Activated CD4-positive, alpha-beta memory T cell treated with anti-CD3 and anti-CD28 coated beads for 36 hours (primary cell): ENCODE measurements at regions of chr6 and their contacts with region 1.

Region 1: DNA sequence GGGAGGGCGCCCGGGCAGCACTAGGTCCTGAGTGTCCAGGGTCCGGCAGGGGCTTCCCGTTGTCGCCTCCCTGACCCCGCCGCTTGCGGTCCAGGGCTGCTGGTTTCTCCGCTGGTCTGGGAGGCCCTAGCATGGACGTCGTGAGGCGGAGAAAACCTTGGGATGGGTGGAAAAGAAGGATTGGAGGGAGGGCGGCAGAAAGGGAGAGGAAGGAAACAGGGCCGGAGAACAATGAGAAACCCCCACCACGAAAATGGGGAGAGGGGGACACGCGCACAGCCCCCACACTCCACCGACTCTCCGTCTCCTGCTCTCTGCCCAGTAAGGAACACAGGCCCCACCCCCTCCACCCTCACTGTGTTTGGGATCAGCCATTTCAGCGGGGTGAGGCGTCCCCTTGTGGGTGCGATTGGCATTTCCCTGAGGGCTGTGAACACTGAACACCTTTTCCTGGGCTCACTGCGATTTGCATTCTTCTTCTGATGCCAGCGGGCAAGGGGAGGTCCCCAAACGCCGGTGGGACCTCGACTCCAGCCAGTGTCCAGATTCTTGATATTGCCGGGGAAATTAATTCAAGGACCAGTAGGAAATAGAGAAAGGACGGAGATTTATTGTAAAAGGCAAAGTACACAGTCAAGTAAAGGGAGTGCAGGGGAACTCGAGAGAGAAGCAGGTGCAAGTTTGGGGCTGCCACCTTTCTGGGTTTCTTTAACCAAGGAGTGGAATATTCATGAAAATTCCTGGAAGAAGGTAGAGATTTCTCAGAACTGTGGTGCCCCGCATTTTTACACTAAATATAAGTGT is 3.3 kb upstream of the RAET1G start:
- DNase-seq: peak; percentile 90
- H3K4me3 Mint-ChIP-seq: peak overlapping the region; percentile 51
- H3K27ac Mint-ChIP-seq: no peak overlapping the region
- H3K4me1 Mint-ChIP-seq: peaks cover 26% of the 10 kb centered on the region
- H3K27me3 Mint-ChIP-seq: peaks cover 83% of the 10 kb centered on the region

Region 2: DNA sequence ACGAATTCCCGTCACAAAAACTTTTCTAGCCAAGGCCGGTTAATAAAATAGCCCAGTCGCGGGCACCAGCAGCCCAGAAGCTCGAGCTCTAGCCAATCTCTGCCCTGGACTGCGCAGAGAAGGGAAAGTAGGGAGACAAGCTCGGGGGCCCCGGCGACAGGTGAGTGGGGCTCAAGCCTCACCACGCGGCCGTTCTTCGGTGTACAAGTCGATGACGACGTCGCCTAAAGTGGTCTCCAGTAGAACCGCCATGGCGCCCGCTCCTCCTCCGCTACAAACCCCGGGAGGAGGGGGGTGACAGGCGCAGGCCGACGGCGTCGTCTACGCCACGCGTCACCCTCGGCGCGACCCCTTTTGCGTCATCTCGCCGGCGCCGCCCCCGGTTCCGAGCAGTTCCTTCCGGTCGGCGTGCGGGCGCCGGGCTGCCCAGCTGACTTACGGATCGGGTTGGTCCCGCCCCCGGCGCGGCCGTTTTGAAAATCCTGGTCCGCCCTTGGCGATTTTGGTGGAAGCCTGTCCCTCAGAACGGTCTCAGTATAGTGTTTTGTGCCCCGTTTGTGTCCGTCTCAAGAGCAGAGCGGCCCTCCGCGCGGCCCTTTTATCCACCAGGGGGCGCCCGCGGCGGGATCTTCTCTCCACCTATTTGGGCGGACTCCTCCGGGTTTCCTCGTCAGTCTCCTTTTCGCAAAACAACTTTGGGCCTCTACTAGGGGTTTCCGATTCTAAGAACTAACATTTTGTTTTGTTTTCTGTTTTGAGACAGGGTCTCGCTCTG is 380.2 kb before region 1 on chr6 and contains the start of gene PPIL4:
- CTCF ChIA-PET with region 1: no interaction called
- POLR2A ChIA-PET with region 1: no interaction called
- intact Hi-C with region 1: loop called (anchors 5 kb)
- DNase-seq: peak; percentile 97
- H3K4me3 Mint-ChIP-seq: peak within 1 kb of the TSS; percentile 97
- H3K27ac Mint-ChIP-seq: peak within 1 kb of the TSS; percentile 97
- H3K4me1 Mint-ChIP-seq: peaks cover 38% of the 10 kb centered on the region
- H3K27me3 Mint-ChIP-seq: peaks cover 4% of the 10 kb centered on the region
- total RNA-seq, gene PPIL4: 21.5 to 23.6 TPM

Region 3: GRCh38 chr6:149636116-149636515 is 290.1 kb before region 1 on chr6:
- CTCF ChIA-PET with region 1: no interaction called
- POLR2A ChIA-PET with region 1: no interaction called
- intact Hi-C with region 1: no loop called
- DNase-seq: no peak
- H3K4me3 Mint-ChIP-seq: no peak overlapping the region
- H3K27ac Mint-ChIP-seq: no peak overlapping the region
- H3K4me1 Mint-ChIP-seq: no peaks in the 10 kb centered on the region
- H3K27me3 Mint-ChIP-seq: no peaks in the 10 kb centered on the region

Region 4: GRCh38 chr6:149834513-149835481 is 91.4 kb before region 1 on chr6:
- CTCF ChIA-PET with region 1: interaction called, 30 read pairs
- POLR2A ChIA-PET with region 1: no interaction called
- intact Hi-C with region 1: loop called (anchors 1 kb)
- DNase-seq: peak; percentile 77
- H3K4me3 Mint-ChIP-seq: no peak overlapping the region
- H3K27ac Mint-ChIP-seq: no peak overlapping the region
- H3K4me1 Mint-ChIP-seq: peaks cover 2% of the 10 kb centered on the region
- H3K27me3 Mint-ChIP-seq: no peaks in the 10 kb centered on the region

Region 5: DNA sequence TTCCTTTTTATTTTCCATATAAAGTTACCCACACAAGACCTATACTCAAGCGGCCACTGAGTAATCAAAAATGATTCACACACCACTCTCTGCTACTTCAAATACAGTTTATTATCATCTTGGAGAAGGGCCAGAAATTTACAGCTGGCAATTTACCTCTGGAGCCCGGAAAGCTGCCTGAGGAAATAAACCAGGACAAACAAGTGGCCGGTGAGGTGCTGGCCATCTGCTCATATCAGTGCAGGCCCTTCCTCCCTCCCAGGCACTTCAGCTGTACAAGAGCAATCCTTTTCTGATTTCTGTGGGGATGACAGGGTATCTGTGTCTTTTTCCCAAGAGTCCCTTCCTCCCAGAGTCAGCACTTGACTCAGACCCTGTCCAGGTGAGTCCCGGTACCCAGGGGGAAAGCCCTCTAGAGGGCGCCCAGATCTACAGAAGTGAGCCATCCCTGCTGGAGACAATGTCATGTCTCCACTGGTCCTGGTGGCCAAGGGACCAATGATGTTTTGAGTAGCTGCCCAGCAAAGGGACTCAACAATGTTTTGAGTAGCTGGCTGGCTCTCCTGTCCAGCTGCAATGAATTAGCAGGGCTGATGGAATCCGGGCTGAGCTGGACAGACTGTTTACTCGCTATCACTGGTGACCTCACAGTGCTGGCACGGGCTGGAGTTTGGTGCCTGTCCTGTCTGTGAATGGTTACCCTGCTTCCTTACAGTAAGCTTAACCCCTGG is 85.7 kb before region 1 on chr6:
- CTCF ChIA-PET with region 1: interaction called, 30 read pairs
- POLR2A ChIA-PET with region 1: no interaction called
- intact Hi-C with region 1: loop called (anchors 1 kb)
- DNase-seq: peak; percentile 71
- H3K4me3 Mint-ChIP-seq: no peak overlapping the region
- H3K27ac Mint-ChIP-seq: no peak overlapping the region
- H3K4me1 Mint-ChIP-seq: no peaks in the 10 kb centered on the region
- H3K27me3 Mint-ChIP-seq: no peaks in the 10 kb centered on the region